Thyroid gland (tissue), 4 donors: ENCODE measurements at regions of chr9 and their contacts with region 1.

Region 1: DNA sequence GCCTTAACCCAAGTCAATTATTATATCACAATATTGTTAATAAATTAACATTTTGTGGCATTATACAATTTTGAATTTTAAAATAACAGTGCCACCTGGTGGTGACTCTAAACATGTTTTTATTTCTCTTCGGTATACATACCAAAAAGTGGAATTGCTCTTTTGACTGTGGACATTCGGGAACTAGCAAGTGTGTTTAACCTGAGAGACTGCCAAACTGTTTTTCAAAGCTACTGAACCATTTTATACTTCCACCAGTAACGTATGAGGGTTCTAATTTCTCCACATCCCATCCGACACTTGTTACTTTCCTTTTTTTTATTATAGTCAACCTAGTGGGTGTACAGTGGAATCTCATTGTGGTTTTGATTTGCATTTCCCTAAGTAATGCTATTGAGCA is 18.3 kb upstream of the HSDL2 start:
- DNase-seq: no peak
- H3K4me3 ChIP-seq: no peak overlapping the region
- H3K27ac ChIP-seq: no peak overlapping the region
- H3K4me1 ChIP-seq: peaks cover 0 to 15% of the 10 kb centered on the region in 2 donors
- H3K27me3 ChIP-seq: no peaks in the 10 kb centered on the region
- CTCF ChIP-seq: peak; percentile 27 to 76 (median 49)
- POLR2A ChIP-seq: no peak

Region 2: DNA sequence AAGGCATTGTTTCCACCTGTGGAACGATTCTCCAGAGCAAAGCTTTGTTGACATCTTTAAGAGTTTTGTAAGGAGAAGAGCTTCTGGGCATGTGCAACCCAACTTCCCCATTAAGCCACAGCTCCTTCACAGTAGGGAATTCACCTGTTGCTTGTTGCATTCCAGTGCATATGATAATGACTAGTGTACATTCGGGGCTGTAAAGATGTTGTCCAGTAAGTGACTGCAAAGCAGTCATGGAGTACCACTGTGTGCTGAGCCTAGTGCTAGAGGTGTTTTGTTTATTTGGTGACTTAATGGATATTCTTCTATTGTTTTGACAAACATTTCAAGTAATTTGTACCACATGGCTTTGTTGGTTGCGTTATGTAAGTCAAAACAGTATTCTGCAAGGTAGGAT is 452.2 kb before region 1 on chr9:
- intact Hi-C with region 1: loop called (anchors 10 kb)
- DNase-seq: no peak
- H3K4me3 ChIP-seq: no peak overlapping the region
- H3K27ac ChIP-seq: no peak overlapping the region
- H3K4me1 ChIP-seq: peaks cover 10 to 18% of the 10 kb centered on the region in 2 donors
- H3K27me3 ChIP-seq: no peaks in the 10 kb centered on the region
- CTCF ChIP-seq: no peak
- POLR2A ChIP-seq: no peak

Region 3: DNA sequence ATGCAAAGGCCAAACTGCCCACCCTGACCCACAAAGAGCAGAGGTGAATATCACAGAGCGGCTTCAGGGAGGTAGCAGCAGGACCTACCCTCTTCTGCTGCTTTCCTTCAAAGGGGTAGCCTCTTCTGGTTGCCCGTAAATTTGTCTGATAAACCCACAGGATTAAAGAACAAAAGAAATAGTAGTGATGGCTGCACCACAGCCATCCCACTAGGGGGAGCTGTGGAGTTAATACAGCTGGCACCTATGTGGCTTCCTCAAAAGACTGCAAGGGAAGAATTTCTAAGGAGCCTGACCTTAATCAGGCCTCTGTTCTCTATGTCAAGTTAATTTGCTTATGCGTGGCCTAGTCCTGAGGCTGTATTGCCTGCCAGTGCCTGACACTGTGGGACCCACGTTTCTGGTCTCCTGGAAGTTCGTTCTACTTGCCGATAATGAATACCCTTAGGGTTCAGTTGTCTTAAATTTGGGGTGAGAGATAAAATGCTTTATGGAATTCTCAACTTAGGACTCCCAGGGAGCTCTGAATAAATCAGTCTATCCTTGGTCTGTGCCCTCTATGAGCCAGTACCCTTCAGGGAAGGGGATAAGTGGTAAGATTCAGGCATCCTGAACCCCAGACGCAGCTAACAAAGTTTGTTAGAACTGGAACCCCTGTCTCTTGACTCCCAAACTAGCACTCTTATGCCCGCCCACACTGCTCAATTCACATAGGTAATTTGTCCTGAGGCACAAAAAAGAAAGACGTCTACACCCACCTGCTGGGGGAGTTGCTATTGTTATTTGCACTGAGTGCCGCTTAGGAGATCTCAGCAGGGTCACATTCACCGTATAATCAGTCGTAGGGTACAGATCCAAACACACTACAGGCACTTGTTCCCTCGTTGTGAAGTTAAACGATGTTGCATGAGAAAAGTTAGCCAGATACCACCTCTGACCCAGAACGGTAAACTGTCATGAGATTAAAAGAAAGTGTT is 263.6 kb before region 1 on chr9:
- intact Hi-C with region 1: loop called (anchors 5 kb)
- DNase-seq: peak; percentile 31 to 53
- H3K4me3 ChIP-seq: no peak overlapping the region
- H3K27ac ChIP-seq: no peak overlapping the region
- H3K4me1 ChIP-seq: no peaks in the 10 kb centered on the region
- H3K27me3 ChIP-seq: no peaks in the 10 kb centered on the region
- CTCF ChIP-seq: peak; percentile 66 to 94 (median 72)
- POLR2A ChIP-seq: no peak

Region 4: GRCh38 chr9:112249277-112249676 is 112.3 kb before region 1 on chr9:
- intact Hi-C with region 1: no loop called
- DNase-seq: no peak
- H3K4me3 ChIP-seq: no peak overlapping the region
- H3K27ac ChIP-seq: no peak overlapping the region
- H3K4me1 ChIP-seq: no peaks in the 10 kb centered on the region
- H3K27me3 ChIP-seq: no peaks in the 10 kb centered on the region
- CTCF ChIP-seq: no peak
- POLR2A ChIP-seq: no peak